Activated naive CD4-positive, alpha-beta T cell treated with anti-CD3 and anti-CD28 coated beads for 36 hours (primary cell): ENCODE measurements at regions of chr10 and their contacts with region 1.

Region 1: GRCh38 chr10:22714479-22715289 is at the start of gene PIP4K2A:
- DNase-seq: peak; percentile 74
- H3K4me3 Mint-ChIP-seq: peak within 1 kb of the TSS; percentile 88
- H3K27ac Mint-ChIP-seq: peak within 1 kb of the TSS; percentile 79
- H3K4me1 Mint-ChIP-seq: peaks cover 27% of the 10 kb centered on the region
- H3K27me3 Mint-ChIP-seq: no peaks in the 10 kb centered on the region
- total RNA-seq, gene PIP4K2A: 68.0 to 74.1 TPM

Region 2: DNA sequence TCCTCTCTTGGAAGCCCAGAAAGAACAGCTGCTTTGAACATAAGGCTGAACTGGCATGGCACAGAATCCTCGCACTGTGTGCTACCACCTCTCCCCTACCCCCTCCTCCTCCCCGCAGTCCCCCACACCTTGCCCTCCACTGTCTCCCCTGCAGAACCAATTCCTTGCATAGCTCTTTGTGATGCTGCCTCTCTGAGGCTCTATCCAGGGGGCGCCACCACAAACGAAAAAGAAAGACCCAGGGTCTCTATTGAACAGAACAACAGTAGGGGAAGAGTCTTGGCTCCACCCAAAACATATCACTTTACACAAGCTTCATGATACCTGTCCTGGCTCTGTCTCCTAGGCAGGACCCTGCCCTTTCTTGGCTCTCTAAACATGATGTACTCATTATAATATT is 470.7 kb before region 1 on chr10:
- CTCF ChIA-PET with region 1: no interaction called
- intact Hi-C with region 1: loop called (anchors 5 kb)
- DNase-seq: no peak
- H3K4me3 Mint-ChIP-seq: no peak overlapping the region
- H3K27ac Mint-ChIP-seq: no peak overlapping the region
- H3K4me1 Mint-ChIP-seq: peaks cover 40% of the 10 kb centered on the region
- H3K27me3 Mint-ChIP-seq: no peaks in the 10 kb centered on the region

Region 3: DNA sequence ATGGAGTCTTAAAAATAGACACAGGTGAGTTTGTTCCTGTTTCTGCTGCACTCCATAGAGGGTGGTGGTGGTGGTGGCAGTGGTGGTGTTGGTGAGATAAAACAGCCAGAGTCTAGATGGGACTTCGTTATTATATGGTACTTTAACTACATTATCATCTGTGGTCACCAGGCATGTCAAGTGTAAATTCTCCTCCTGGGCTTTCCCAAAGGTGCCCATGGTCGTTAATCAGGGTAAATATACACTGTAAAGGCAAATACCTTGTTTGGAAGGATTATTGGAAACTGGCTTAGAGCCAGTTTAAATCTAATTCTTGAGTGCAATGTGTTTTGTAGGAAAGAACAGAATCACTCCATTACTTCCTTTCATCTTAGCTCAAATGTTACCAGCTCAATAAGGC is 420.0 kb before region 1 on chr10:
- CTCF ChIA-PET with region 1: no interaction called
- intact Hi-C with region 1: no loop called
- DNase-seq: no peak
- H3K4me3 Mint-ChIP-seq: no peak overlapping the region
- H3K27ac Mint-ChIP-seq: no peak overlapping the region
- H3K4me1 Mint-ChIP-seq: no peaks in the 10 kb centered on the region
- H3K27me3 Mint-ChIP-seq: peaks cover 11% of the 10 kb centered on the region

Region 4: GRCh38 chr10:22611425-22612115 is 103.1 kb before region 1 on chr10:
- CTCF ChIA-PET with region 1: no interaction called
- intact Hi-C with region 1: loop called (anchors 1 kb)
- DNase-seq: peak; percentile 78
- H3K4me3 Mint-ChIP-seq: peak overlapping the region; percentile 41
- H3K27ac Mint-ChIP-seq: peak overlapping the region; percentile 79
- H3K4me1 Mint-ChIP-seq: peaks cover 86% of the 10 kb centered on the region
- H3K27me3 Mint-ChIP-seq: no peaks in the 10 kb centered on the region

Region 5: DNA sequence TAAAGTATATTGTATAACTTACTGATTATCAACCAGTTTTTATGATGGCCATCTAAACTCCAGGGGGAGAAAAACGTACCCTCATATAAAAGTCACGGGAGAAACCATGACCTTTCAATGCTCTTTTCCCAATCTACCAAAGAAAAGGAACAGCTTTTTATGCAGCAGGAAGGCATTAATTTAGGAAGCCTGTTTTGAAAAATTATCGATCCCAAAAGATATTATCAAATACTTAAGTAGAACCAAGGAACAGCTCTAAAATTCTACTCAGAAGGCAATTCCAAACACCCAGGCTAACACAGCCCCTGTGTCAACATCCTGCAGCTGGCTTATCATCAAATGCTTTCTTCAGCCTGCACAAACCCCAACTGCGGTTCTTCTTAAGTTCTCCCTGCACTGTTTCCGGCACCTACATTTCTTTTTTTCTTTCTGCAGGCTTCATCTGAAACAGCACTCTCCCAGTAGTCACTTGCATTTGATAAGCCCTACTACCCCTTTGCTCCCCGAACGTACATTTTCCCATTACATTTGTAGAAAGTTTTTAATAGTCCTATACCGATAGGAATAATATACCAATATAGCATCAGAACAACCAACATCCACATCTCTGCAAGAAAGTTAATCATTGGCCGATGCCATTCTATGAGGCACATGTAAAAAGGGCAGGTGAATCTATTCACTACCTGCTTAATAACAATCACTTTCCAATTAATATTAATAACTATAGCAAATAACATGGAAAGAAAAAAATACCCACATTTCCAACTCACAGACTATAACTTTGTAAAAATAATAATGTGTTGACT is 48.2 kb before region 1 on chr10:
- CTCF ChIA-PET with region 1: interaction called, 5 read pairs
- intact Hi-C with region 1: loop called (anchors 1 kb)
- DNase-seq: peak; percentile 74
- H3K4me3 Mint-ChIP-seq: peak overlapping the region; percentile 73
- H3K27ac Mint-ChIP-seq: peak overlapping the region; percentile 74
- H3K4me1 Mint-ChIP-seq: peaks cover 76% of the 10 kb centered on the region
- H3K27me3 Mint-ChIP-seq: no peaks in the 10 kb centered on the region